Breast epithelium (tissue), 4 donors: ENCODE measurements at regions of chr9 and their contacts with region 1.

Region 1: GRCh38 chr9:93988056-93988455 is 32.9 kb upstream of the BARX1 start:
- DNase-seq: no peak
- H3K4me3 ChIP-seq: no peak overlapping the region
- H3K27ac ChIP-seq: no peak overlapping the region
- H3K4me1 ChIP-seq: no peaks in the 10 kb centered on the region
- H3K27me3 ChIP-seq: no peaks in the 10 kb centered on the region
- CTCF ChIP-seq: no peak
- POLR2A ChIP-seq: no peak

Region 2: DNA sequence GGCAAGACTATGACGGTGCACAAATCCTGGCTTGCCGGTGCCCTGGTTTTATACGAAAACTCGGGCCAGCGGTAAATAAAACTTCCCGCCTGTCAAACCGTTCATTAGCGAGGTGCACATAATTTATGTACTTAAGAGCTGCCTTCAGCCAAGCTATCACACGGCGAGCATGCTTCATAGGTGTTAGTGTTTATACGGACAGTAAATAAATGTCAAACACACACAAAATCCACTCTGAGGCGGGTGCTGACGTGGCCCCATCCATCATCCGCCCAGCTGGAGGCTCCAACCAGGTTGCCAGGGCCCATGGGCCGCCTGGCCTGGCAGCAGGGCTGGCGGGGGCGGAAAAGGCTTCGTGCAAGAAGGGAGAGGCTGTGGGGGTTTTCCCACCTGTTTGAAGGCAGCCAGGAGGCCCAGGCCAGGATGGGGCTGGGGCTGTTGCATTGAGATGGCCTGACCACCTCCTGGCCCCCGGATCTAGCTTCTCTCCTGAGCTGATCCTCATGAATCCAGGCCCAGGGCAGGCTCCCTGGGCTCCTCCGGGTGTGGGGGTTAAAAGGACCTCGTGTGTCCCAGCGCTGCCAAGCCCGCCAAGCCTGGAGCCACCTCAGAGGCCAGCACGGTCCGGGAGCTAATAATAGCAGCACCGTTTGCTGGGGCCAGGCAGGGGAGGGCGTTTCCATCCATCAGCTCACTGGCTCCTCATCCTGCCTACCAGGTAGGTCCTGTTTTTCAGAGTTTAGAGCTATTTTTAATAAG is 76.1 kb before region 1 on chr9:
- intact Hi-C with region 1: loop called (anchors 2 kb)
- DNase-seq: no peak
- H3K4me3 ChIP-seq: no peak overlapping the region
- H3K27ac ChIP-seq: no peak overlapping the region
- H3K4me1 ChIP-seq: no peaks in the 10 kb centered on the region
- H3K27me3 ChIP-seq: peaks cover 0 to 5% of the 10 kb centered on the region in 2 donors
- CTCF ChIP-seq: no peak
- POLR2A ChIP-seq: no peak